ENCODE measurements at regions of chr4 and their contacts with region 1.

Region 1: GRCh38 chr4:187656959-187657358 is 338.6 kb upstream of the ZFP42 start:
- DNase-seq: no peak
- H3K4me3 ChIP-seq: no peak overlapping the region
- H3K27ac ChIP-seq: no peak overlapping the region
- H3K4me1 ChIP-seq: no peaks in the 10 kb centered on the region
- H3K27me3 ChIP-seq: no peaks in the 10 kb centered on the region
- CTCF ChIP-seq: no peak

Region 2: DNA sequence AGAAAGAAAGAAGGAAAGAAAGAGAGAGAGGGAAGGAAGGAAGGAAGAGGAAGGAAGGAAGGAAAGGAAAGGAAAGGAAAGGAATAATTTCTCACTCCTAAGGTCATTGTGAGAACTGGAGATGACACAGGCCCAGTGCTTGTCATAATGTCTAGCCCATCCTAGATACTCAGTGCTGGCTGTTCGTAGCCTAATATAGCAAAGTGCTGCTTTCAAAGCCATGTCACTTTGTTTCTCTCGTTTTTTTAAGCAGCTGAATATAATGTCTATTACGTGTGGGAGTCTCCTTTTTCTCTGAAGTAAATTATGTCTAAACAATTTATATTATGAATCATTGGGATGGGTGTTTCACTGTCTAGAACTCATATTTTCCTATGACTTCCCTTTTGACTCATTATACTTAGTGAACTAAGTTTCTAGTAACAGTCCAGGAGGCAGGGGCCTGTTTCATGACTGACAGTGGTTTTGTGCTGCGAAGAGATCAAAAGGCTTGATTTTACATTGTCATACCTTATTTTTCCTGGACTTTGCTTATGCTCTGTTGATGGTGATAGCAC is 11.6 kb after region 1 on chr4:
- CTCF ChIA-PET with region 1: interaction called, 14 read pairs
- POLR2A ChIA-PET with region 1: no interaction called
- intact Hi-C with region 1: no loop called
- DNase-seq: no peak
- H3K4me3 ChIP-seq: no peak overlapping the region
- H3K27ac ChIP-seq: no peak overlapping the region
- H3K4me1 ChIP-seq: no peaks in the 10 kb centered on the region
- H3K27me3 ChIP-seq: no peaks in the 10 kb centered on the region
- CTCF ChIP-seq: no peak